A549 (cell line): ENCODE measurements at regions of chr13 and their contacts with region 1.

Region 1: GRCh38 chr13:113393563-113394338 is 29.8 kb upstream of the GRTP1 start:
- DNase-seq: peak; percentile 58 to 68
- ATAC-seq: peak; percentile 96 to 98
- H3K4me3 ChIP-seq: peak overlapping the region; percentile 86
- H3K27ac ChIP-seq: peak overlapping the region; percentile 91 to 96
- H3K4me1 ChIP-seq: peaks cover 4% of the 10 kb centered on the region; the same call in 1 of the 3 replicates
- CTCF ChIP-seq: peak; percentile 84
- EP300 ChIP-seq: no peak
- POLR2A ChIP-seq: no peak; the same call in 1 of the 2 replicates
- RAD21 ChIP-seq: peak; percentile 51 to 80; a peak in 4 of 5 replicates

Region 2: GRCh38 chr13:112828082-112828699 is 565.6 kb before region 1 on chr13:
- CTCF ChIA-PET with region 1: no interaction called
- POLR2A ChIA-PET with region 1: no interaction called
- DNase-seq: no peak
- ATAC-seq: no peak
- H3K4me3 ChIP-seq: no peak overlapping the region
- H3K27ac ChIP-seq: no peak overlapping the region
- H3K4me1 ChIP-seq: no peaks in the 10 kb centered on the region
- CTCF ChIP-seq: no peak
- EP300 ChIP-seq: no peak
- POLR2A ChIP-seq: no peak
- RAD21 ChIP-seq: no peak

Region 3: DNA sequence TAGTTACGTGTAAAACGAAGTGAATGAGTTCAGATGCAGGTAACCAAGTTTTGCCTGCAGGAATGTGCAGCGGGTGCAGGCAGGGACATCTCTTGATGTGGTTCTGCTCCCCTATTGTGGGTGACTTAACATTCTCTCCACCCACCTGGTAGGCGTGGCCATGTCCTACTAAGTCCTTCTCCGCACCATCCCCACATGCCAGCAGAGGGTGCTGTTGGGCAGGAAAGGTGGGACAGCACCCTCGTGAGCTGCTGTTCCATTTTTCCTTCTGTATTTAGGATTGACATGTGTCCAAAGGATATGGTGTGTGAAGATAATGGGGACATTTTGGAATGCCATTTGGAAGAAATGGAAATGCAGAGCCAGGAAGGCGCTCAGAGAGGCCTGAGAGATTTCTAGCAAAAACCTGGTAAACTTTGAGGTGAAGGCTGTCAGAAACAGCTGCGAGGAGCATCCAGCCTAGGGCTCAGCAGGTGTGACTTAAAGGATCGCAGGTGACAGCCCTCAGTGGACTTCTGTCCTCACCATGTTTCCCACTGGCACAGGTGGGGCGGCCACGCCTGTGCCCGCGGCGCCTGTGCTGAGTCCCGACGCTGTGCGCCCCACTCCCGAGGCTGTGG is 451.0 kb before region 1 on chr13:
- CTCF ChIA-PET with region 1: interaction called, 11 read pairs
- POLR2A ChIA-PET with region 1: no interaction called
- DNase-seq: peak; percentile 76 to 92
- ATAC-seq: peak; percentile 94 to 97
- H3K4me3 ChIP-seq: peak overlapping the region; percentile 66
- H3K27ac ChIP-seq: peak overlapping the region; percentile 60 to 88; a peak in 5 of 6 replicates
- H3K4me1 ChIP-seq: no peaks in the 10 kb centered on the region
- CTCF ChIP-seq: peak; percentile 79
- EP300 ChIP-seq: no peak
- POLR2A ChIP-seq: no peak
- RAD21 ChIP-seq: peak; percentile 76 to 86

Region 4: DNA sequence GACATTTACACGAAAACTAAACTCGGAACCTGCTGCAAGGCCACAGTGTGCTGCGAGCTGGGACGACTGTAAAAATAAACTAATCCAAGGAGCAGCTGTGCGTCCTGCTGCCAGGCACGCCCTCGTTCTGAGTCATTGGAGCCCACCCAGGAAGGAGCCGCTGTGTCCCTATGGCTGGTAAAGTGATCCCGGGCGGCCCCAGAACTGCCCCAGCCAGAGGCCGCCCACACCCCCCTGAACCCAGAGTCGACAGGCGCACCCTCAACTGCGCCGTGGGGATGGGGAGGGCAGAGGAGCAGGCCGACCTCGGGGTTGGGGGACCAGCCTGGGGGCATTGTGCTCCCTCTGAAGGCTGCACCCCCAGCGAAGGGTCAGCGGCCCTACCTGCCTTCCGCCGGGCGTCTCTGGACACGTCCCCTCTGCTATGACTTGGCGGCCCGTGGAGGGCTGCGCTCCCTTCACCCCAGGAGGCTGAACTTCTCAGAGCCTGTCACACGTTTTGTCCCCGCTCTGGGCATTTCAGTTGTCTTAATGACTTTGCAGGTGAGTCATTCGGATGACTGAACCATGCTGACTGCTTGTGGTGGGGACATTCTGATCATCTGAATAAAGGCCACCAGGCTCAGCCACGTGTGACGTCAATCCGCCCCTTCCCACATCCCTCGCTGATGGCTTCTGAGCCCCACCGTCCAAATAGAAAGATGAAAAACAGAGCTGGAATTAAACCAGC is 16.9 kb after region 1 on chr13:
- CTCF ChIA-PET with region 1: interaction called, 18 read pairs
- POLR2A ChIA-PET with region 1: no interaction called
- DNase-seq: peak; percentile 41 to 52
- ATAC-seq: peak; percentile 61 to 75
- H3K4me3 ChIP-seq: 0 out of 3 replicates have a peak overlapping the region, but pooled peaks have one; percentile 23
- H3K27ac ChIP-seq: peak overlapping the region; percentile 71 to 77; a peak in 4 of 6 replicates
- H3K4me1 ChIP-seq: peaks cover 20% of the 10 kb centered on the region
- CTCF ChIP-seq: no peak
- EP300 ChIP-seq: no peak
- POLR2A ChIP-seq: no peak
- RAD21 ChIP-seq: no peak

Region 5: DNA sequence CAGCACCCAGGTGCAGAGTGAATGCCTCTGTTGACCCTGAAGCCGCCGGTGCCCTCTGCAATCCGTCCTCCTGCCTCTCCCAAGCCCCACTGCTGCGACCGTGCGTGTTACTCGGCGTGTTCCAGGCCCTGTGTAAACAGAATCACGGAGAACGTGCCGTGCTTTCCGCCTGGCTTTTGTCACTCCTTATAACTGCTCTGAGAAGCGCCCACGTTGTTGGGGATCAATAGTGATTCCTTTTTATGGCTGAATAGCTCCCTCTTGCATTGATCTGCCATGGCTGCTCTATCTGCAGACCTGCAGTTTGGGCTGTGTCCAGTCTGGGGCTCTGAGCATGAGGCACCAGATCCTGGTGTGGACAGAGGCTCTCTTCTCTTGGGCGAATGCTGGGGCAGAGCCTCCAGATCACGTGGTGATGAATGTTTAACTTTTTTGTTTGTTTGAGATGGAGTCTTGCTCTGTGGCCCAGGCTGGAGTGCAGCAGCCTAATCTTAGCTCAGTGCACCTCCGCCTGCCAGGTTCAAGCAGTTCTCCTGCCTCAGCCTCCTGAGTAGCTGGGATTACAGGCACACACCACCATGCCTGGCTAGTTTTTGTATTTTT is 43.8 kb after region 1 on chr13:
- CTCF ChIA-PET with region 1: no interaction called
- POLR2A ChIA-PET with region 1: no interaction called
- DNase-seq: peak in 1 of 2 experiments; percentile 23
- ATAC-seq: peak; percentile 71 to 73; a peak in 5 of 6 replicates
- H3K4me3 ChIP-seq: no peak overlapping the region
- H3K27ac ChIP-seq: no peak overlapping the region
- H3K4me1 ChIP-seq: no peaks in the 10 kb centered on the region
- CTCF ChIP-seq: no peak
- EP300 ChIP-seq: no peak
- POLR2A ChIP-seq: no peak
- RAD21 ChIP-seq: no peak

Region 6: GRCh38 chr13:113656831-113657671 is 263.3 kb after region 1 on chr13:
- CTCF ChIA-PET with region 1: no interaction called
- POLR2A ChIA-PET with region 1: no interaction called
- DNase-seq: no peak
- ATAC-seq: no peak
- H3K4me3 ChIP-seq: no peak overlapping the region
- H3K27ac ChIP-seq: no peak overlapping the region
- H3K4me1 ChIP-seq: no peaks in the 10 kb centered on the region
- CTCF ChIP-seq: no peak
- EP300 ChIP-seq: no peak
- POLR2A ChIP-seq: no peak
- RAD21 ChIP-seq: no peak